H1 (cell line): ENCODE measurements at regions of chr2 and their contacts with region 1.

Region 1: DNA sequence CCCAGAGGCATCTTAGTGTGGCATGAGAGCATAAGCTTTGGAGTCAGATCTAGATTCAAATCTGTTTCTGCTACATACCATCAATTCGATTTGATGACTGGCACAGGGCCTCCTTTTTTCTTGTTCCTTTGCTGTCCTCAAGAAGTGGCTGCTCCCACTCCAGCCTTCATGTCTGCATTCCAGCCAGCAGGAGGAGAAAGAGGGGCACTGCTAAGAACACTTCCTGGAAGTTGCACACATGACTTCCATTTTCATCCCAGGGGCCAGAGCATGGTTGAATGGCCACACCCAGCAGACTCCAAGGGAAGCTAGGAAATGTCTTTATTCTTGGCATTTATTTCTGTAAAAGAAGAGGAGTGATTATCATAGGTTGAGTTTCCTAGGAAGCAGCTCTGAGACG is 50.4 kb downstream of the EML6 start:
- DNase-seq: peak in 1 of 2 experiments; percentile 57
- H3K4me3 ChIP-seq: no peak overlapping the region
- H3K27ac ChIP-seq: no peak overlapping the region
- H3K4me1 ChIP-seq: no peaks in the 10 kb centered on the region
- H3K27me3 ChIP-seq: no peaks in the 10 kb centered on the region
- CTCF ChIP-seq: peak; percentile 47 to 74 (median 57)
- EP300 ChIP-seq: no peak
- POLR2A ChIP-seq: no peak
- RAD21 ChIP-seq: peak; percentile 42 to 48

Region 2: GRCh38 chr2:54763636-54764291 is 10.1 kb before region 1 on chr2:
- CTCF ChIA-PET with region 1: interaction called, 27 read pairs
- POLR2A ChIA-PET with region 1: no interaction called
- DNase-seq: peak in 1 of 2 experiments; percentile 60
- H3K4me3 ChIP-seq: no peak overlapping the region
- H3K27ac ChIP-seq: no peak overlapping the region
- H3K4me1 ChIP-seq: no peaks in the 10 kb centered on the region
- H3K27me3 ChIP-seq: no peaks in the 10 kb centered on the region
- CTCF ChIP-seq: peak; percentile 62 to 86 (median 85)
- EP300 ChIP-seq: no peak
- POLR2A ChIP-seq: no peak
- RAD21 ChIP-seq: peak; percentile 81 to 83

Region 3: DNA sequence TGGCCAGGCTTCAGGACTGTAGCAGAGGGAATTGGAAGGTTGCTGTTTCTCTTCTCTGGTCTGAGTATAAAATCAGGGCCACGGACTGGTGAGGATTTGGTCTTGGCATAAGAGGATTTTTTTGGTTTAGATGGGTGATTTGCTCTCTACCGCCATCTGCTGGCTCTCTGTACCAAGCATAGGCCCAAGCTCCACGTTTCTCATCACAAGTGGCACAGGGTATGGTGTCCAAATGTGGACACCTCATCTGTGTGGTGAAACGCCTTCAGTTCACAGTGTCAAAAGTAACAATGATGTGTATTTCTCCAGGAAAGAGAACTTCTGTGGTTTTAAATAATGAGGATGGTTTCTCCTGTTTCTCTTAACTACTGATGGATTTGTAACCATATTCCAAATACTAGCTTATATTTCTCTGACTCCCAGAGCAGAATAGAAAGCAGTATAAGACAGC is 64.8 kb after region 1 on chr2:
- CTCF ChIA-PET with region 1: interaction called, 10 read pairs
- POLR2A ChIA-PET with region 1: no interaction called
- DNase-seq: peak; percentile 27 to 81
- H3K4me3 ChIP-seq: no peak overlapping the region
- H3K27ac ChIP-seq: no peak overlapping the region
- H3K4me1 ChIP-seq: no peaks in the 10 kb centered on the region
- H3K27me3 ChIP-seq: no peaks in the 10 kb centered on the region; a peak in 2 of 7 replicates
- CTCF ChIP-seq: peak; percentile 69 to 88 (median 78)
- EP300 ChIP-seq: no peak
- POLR2A ChIP-seq: no peak
- RAD21 ChIP-seq: peak; percentile 68 to 76